ENCODE measurements at regions of chr6 and their contacts with region 1.

Region 1: GRCh38 chr6:5989141-5989723 is 17.5 kb downstream of the NRN1 start:
- DNase-seq: no peak
- H3K4me3 Mint-ChIP-seq: no peak overlapping the region
- H3K27ac Mint-ChIP-seq: no peak overlapping the region
- H3K4me1 Mint-ChIP-seq: peaks cover 31% of the 10 kb centered on the region
- H3K27me3 Mint-ChIP-seq: peaks cover 50% of the 10 kb centered on the region

Region 2: GRCh38 chr6:5287205-5287965 is 701.8 kb before region 1 on chr6:
- intact Hi-C with region 1: loop called (anchors 10 kb)
- DNase-seq: no peak
- H3K4me3 Mint-ChIP-seq: no peak overlapping the region
- H3K27ac Mint-ChIP-seq: no peak overlapping the region
- H3K4me1 Mint-ChIP-seq: peaks cover 19% of the 10 kb centered on the region
- H3K27me3 Mint-ChIP-seq: no peaks in the 10 kb centered on the region

Region 3: DNA sequence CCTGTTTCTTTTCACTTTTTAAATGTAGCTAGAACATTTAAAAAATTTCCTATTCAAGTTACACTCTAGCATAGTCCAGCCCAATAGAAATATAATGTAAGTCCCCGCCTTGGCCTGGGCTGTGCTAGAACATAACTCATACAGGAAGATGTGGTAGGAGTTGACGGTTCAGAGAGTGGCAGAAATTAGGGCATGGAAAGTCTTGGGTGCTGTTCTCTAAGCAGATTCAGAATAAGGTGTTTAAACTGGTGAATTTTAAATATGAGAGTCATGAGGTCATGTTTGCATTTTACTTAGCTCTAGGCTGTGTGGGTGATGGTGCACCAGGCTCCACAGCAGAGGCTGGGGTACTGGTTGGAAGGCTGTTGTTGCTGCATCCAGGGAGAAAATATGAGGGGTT is 471.4 kb before region 1 on chr6:
- intact Hi-C with region 1: loop called (anchors 5 kb)
- DNase-seq: peak; percentile 74
- H3K4me3 Mint-ChIP-seq: peak overlapping the region; percentile 17
- H3K27ac Mint-ChIP-seq: peak overlapping the region; percentile 85
- H3K4me1 Mint-ChIP-seq: peaks cover 31% of the 10 kb centered on the region
- H3K27me3 Mint-ChIP-seq: no peaks in the 10 kb centered on the region

Region 4: GRCh38 chr6:6515691-6516607 is 526.7 kb after region 1 on chr6:
- intact Hi-C with region 1: loop called (anchors 10 kb)
- DNase-seq: peak; percentile 79
- H3K4me3 Mint-ChIP-seq: no peak overlapping the region
- H3K27ac Mint-ChIP-seq: peak overlapping the region; percentile 59
- H3K4me1 Mint-ChIP-seq: peaks cover 14% of the 10 kb centered on the region
- H3K27me3 Mint-ChIP-seq: peaks cover 84% of the 10 kb centered on the region

Region 5: DNA sequence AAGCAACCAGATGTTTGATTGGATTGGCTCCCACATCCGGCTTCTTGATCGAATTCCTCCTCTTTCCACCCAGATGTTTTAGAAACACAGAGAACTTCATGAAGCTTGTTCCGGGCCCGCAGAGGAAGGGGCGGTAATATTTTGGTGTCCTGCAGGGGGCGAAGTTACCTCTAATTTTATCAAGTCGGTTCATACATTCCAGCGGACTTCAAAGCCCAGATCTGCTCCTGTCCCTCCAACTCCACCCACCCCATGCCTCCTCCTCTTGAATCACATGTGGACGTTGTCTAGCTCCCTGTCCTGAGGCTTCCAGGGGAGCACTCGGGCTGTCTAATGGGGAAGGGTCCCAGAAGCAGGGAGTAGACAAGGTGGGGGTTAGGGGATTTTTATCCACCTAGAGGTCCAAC is 1733.8 kb after region 1 on chr6:
- intact Hi-C with region 1: no loop called
- DNase-seq: peak; percentile 89
- H3K4me3 Mint-ChIP-seq: no peak overlapping the region
- H3K27ac Mint-ChIP-seq: no peak overlapping the region
- H3K4me1 Mint-ChIP-seq: peaks cover 12% of the 10 kb centered on the region
- H3K27me3 Mint-ChIP-seq: peaks cover 50% of the 10 kb centered on the region

Measured in activated CD4-positive, alpha-beta T cell treated with anti-CD3 and anti-CD28 coated beads, Interleukin-2, amount 10 ng/mL, durations not matched to agents 24 days and 14 days (primary cell).